MCF 10A (cell line): ENCODE measurements at regions of chr1 and their contacts with region 1.

Region 1: DNA sequence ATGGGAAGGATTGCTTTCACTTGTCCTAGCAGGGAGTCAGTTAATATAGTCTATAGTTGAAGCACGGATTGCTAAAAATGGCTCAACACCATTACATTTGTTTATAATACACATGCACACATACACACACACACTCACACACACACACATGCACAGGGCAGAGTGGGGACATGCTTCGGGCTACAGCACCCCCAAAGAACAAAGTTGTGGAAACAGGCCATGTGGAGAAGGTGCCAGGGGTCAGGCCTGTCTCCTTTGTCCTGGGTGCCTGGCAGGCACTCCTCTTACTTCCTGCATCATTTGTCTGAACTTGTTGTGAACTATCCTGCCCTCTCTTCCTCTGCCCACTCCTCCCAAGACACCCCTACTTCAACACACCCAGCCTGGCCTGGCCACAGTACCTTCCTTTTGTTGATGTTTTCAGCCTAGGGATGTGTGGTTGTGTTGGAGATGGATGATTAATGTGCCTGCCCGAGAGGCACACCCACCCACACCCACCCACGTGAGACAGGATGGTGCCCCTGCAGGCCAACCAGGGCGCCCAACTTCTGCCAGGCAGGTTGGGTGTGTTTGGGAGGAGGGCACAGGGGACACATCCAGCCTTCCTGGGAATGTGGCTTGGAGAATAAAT is 17.5 kb downstream of the RASSF5 start:
- DNase-seq: peak; percentile 93
- H3K4me3 Mint-ChIP-seq: no peak overlapping the region
- H3K27ac Mint-ChIP-seq: peak overlapping the region; percentile 85
- H3K4me1 Mint-ChIP-seq: peaks cover 18% of the 10 kb centered on the region
- H3K27me3 Mint-ChIP-seq: no peaks in the 10 kb centered on the region
- CTCF ChIP-seq: no peak

Region 2: GRCh38 chr1:206513312-206514111 is 11.3 kb before region 1 on chr1:
- CTCF ChIA-PET with region 1: no interaction called
- POLR2A ChIA-PET with region 1: interaction called, 13 read pairs
- intact Hi-C with region 1: loop called (anchors 1 kb)
- DNase-seq: peak; percentile 100
- H3K4me3 Mint-ChIP-seq: peak overlapping the region; percentile 59
- H3K27ac Mint-ChIP-seq: peak overlapping the region; percentile 99
- H3K4me1 Mint-ChIP-seq: peaks cover 73% of the 10 kb centered on the region
- H3K27me3 Mint-ChIP-seq: no peaks in the 10 kb centered on the region
- CTCF ChIP-seq: no peak

Region 3: GRCh38 chr1:206631085-206631509 is 106.2 kb after region 1 on chr1:
- CTCF ChIA-PET with region 1: no interaction called
- POLR2A ChIA-PET with region 1: no interaction called
- intact Hi-C with region 1: no loop called
- DNase-seq: peak; percentile 76
- H3K4me3 Mint-ChIP-seq: no peak overlapping the region
- H3K27ac Mint-ChIP-seq: no peak overlapping the region
- H3K4me1 Mint-ChIP-seq: peaks cover 22% of the 10 kb centered on the region
- H3K27me3 Mint-ChIP-seq: peaks cover 12% of the 10 kb centered on the region
- CTCF ChIP-seq: peak; percentile 28